GM18951 (cell line): ENCODE measurements at regions of chr3 and their contacts with region 1.

Region 1: DNA sequence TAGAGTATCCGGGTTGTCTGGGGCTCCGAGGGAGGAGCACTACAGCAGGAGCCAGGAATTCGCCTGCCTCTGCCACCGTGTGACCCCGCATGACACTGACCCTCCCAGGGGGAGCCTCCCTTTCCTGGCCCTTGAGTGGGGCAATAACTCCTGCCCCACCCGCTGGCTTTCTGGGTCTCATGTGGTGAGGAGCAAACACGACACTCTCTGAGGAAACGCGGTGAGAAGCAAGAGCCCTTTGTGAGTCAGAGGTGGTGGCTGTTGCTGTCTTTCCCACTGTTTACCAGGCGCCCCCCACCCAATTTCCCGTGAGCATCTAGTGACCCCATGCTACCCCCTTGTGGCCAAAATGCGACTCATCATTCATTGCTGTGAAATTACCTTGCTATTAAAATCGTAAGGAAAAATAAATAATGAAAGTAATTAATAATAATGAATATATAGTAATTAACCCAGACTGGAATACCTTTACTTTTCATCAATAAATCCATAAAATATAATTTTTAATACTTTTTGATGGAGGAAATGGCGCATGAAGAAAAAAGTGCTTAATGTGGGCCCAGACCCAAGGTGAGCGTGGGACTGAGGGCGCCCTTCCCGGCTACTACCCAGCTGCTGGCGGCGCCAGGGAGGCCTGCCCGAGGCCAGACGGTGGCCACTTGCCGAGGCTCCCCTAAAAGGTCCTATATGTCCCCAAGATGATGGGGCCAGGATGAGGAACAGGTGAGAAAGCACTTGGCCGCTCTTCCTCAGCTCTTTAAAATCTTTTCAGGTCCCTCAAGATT is 29.3 kb downstream of the CCNL1 start:
- POLR2A ChIP-seq: no peak

Region 2: DNA sequence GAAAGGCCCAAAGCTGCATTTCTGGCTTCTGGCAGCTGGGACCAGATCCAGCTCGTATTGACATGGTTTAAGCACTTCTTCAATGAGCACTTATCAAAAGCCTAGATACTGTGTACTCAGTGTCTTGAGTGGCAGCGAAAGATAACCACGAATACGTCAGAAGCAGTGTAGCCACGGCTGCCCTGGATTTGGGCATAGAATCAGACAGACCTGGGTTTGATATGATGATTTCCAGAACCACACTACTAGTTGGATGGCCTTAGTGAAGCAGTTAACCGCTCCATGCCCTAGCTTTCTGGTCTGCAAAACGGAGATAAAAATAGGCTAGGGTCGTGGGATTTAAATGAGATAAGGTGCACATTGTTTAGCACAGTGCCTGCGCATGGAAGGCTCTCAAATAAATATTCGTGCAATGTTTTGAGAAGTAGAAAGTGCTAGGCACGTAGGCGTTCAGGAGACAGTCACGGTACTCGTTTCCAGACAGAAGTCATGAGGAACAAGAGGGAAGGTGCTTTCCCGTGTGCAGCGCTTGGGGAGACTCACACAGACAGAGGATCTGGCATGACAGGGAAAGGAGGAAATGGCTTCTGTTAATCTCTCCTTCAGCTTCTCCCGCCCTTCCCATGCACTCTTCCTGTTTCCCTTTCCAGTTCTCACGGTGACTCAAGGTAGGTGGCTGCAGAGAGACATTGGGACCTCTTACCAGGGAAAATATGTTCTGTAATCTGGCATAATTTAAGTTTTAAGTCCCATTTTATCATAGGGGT is 41.0 kb before region 1 on chr3:
- in situ Hi-C with region 1: loop called (anchors 5 kb)
- POLR2A ChIP-seq: no peak

Region 3: DNA sequence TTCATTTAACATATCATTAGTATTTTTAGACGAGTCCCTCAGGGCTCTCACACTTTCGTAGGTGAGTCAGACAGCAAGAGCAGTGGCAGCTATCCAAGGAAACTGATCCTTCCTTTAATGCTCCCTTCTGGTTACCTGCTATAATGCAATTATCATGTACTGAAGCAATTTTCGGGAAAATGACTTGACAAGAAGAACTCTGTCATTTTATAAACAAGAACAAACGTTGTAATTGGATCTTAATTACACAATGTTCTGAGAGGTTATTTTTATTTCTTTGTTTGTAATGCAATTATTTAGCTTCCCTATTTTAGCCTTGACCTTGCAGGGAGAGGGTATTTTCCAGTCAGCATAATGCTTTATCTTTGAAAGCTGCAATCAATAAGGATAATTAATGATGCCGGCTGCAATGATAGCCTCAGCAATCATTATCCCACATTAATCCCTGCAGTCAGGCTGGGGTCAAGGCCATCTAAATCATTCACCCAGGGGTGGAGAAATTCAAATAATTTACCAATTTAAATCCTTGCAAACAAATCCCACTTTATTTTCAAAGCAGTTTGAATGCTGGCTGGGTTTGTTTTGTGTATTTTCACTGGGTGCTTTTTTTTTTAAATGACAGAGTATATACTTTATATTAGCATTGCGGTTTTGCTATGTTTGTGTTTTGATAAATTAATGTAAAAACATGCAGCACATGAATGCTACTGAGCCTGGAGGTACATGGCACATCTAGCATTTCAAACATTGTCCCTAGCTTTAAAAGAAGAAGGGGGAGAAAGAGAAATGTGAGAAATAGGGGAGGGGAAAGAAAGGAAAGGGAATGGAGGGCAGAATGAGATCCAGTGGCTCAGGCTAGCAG is 725.6 kb after region 1 on chr3:
- in situ Hi-C with region 1: no loop called
- POLR2A ChIP-seq: no peak